ENCODE measurements at regions of chr4 and their contacts with region 1.

Region 1: GRCh38 chr4:54217642-54218495 is 11.2 kb upstream of the PDGFRA start:
- DNase-seq: peak; percentile 86
- ATAC-seq: peak; percentile 96

Region 2: DNA sequence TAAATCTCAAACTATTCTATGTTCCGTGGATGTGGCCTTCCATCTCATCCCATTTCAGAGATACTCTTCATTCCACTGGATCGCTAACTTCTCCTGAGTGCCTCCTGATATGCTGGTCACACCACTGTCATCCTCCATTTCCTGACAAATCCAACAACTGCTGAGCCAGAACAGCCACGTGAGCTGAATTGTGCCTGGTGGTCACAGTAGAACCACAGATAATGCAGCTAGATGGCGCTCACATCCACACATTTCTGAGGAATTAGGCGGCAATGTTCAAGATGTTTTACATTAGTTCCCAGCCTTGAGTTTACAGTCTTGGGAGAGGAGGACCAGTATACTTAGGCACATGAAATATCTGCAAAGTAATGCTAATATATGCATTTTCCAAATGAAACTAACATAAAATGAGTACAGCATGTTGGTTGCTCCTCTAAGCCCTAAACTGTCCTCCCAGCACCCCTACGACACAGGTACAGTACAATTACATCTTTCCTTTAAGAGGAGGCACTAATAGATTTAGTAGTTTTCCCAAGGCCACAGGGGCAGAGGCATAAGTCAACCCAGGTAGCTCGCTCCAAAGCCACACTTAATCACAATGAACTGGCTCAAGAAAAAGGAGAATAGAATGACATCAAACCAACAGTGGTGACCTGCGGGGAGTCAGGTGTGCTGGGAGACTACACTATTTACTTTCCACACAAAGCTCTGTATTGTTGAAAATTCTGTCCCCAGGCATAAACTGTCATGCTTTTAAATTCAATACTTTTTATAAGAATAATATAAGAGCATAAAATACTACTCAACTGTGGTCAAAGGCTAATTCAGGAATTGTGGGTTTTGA is 287.7 kb before region 1 on chr4:
- intact Hi-C with region 1: loop called (anchors 5 kb)
- DNase-seq: peak; percentile 66
- ATAC-seq: peak; percentile 96

Measured in Right ventricle myocardium superior (tissue), 1 donor.